ENCODE measurements at regions of chr17 and their contacts with region 1.

Region 1: DNA sequence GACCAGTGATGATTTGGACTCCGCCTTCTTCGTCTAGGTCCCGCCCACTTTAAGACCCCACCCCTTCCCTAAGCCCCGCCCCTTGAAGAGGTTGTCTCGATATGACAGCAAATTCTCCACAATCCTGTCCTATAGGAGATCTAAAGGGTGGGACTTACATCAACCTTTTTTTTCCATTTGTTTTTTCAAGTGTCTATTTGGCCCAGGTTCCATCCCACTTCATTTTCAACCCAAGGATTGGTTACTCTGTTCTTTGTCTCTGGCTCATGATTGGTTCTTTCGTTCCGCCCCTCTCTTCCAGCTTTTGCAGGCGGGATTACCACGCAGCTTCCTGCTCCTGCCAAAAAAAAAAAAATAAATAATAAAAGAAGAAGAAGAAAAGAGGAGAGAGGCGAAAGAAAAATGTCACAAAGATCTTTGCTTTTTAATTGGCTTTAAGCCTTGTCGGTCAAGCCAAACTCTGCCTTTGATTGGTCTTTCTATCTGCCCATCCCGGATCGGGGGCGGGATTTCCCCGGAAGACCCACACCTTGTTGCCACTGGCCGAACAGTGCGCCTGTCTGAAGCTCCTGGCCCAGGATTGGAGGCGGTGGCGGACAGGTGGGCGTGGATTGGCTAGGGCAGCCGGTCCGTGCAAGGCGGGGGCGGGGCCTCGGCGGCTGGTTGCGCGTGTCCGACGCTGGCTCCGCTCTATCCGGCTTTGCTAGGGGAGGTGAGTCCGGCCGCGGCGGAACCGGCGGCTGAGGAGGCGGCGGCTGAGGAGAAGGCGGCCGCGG is 1.2 kb upstream of the NLK start:
- DNase-seq: peak; percentile 100
- H3K4me3 ChIP-seq: peak overlapping the region; percentile 87
- H3K4me3 Mint-ChIP-seq: peak overlapping the region; percentile 99
- H3K27ac Mint-ChIP-seq: peak overlapping the region; percentile 93
- H3K4me1 ChIP-seq: peaks cover 40% of the 10 kb centered on the region
- H3K4me1 Mint-ChIP-seq: peaks cover 24% of the 10 kb centered on the region
- H3K27me3 ChIP-seq: no peaks in the 10 kb centered on the region
- H3K27me3 Mint-ChIP-seq: no peaks in the 10 kb centered on the region
- CTCF ChIP-seq: no peak

Region 2: GRCh38 chr17:27805520-27806146 is 235.6 kb before region 1 on chr17:
- CTCF ChIA-PET with region 1: interaction called, 7 read pairs
- POLR2A ChIA-PET with region 1: no interaction called
- intact Hi-C with region 1: loop called (anchors 5 kb)
- DNase-seq: peak; percentile 97
- H3K4me3 ChIP-seq: peak overlapping the region; percentile 19
- H3K4me3 Mint-ChIP-seq: peak overlapping the region; percentile 65
- H3K27ac Mint-ChIP-seq: peak overlapping the region; percentile 95
- H3K4me1 ChIP-seq: peaks cover 52% of the 10 kb centered on the region
- H3K4me1 Mint-ChIP-seq: peaks cover 41% of the 10 kb centered on the region
- H3K27me3 ChIP-seq: no peaks in the 10 kb centered on the region
- H3K27me3 Mint-ChIP-seq: no peaks in the 10 kb centered on the region
- CTCF ChIP-seq: peak; percentile 99

Region 3: DNA sequence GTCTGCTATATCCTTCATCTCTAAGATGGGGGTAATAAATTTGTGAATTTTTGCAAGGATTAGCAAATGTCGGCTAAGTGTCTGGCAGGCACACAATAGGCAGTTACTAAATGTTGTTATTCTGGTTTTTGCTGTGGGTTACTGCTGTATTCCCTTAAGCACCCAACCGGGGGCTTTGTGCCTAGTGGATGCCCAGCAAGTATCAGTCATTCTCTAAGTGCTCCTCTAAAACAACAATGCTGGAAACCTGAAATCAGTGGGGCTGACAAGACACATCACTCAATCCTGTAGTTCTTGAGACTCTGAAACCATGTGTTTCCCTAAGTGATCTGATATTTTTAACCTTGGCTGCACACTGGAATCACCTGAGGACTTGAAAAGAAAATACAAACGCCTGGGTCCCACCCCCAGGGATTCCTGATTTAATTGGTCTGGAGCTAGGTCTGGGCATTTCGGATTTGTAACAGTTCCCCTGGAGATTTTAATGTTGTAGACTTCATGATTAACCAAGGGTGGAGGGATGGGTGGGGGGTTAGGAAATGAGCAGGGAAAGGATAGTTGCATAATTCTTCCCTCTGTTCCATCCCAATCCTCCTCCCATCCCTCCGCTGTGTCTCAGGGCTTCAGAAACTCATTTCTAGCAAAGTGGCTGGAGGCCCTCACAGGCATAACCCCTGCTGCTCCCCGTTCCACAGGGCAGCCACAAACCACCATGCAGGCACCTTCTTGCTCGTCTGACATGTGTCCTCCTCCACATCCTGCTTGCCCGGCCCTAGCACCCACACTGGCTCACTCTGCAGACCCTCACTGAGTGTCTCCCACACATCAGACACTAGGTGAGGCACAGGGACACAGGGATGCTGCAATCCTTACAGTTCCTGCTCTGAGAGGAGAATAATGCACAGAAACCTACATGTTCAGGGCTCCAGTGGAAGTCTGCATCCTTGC is 86.4 kb before region 1 on chr17:
- CTCF ChIA-PET with region 1: no interaction called
- POLR2A ChIA-PET with region 1: interaction called, 6 read pairs
- intact Hi-C with region 1: loop called (anchors 5 kb)
- DNase-seq: peak in 1 of 2 experiments; percentile 46
- H3K4me3 ChIP-seq: no peak overlapping the region
- H3K4me3 Mint-ChIP-seq: no peak overlapping the region
- H3K27ac Mint-ChIP-seq: no peak overlapping the region
- H3K4me1 ChIP-seq: peaks cover 56% of the 10 kb centered on the region
- H3K4me1 Mint-ChIP-seq: peaks cover 43% of the 10 kb centered on the region
- H3K27me3 ChIP-seq: no peaks in the 10 kb centered on the region
- H3K27me3 Mint-ChIP-seq: no peaks in the 10 kb centered on the region
- CTCF ChIP-seq: peak in 1 of 2 experiments; percentile 3

Region 4: DNA sequence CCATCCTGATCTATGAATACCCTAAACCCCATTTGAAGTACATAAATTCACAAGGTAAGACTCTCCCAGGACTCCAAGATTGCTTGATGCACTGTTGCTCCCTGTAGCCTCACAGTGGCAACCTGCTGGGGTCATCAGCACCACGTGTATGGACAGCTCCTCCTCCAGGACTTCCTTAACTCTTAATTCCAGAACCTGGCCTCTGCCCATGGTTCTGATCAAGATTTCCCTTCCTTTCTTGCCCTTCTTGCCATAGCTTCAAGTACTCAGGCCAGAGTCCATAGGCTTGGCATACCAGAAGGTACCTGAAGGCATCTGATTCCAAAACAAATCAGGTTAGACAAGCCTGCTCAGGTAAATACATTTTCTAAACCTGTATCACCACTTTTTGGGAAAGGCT is 32.7 kb before region 1 on chr17:
- CTCF ChIA-PET with region 1: interaction called, 7 read pairs
- POLR2A ChIA-PET with region 1: interaction called, 5 read pairs
- intact Hi-C with region 1: loop called (anchors 1 kb)
- DNase-seq: peak; percentile 91 to 94
- H3K4me3 ChIP-seq: no peak overlapping the region
- H3K4me3 Mint-ChIP-seq: no peak overlapping the region
- H3K27ac Mint-ChIP-seq: no peak overlapping the region
- H3K4me1 ChIP-seq: peaks cover 5% of the 10 kb centered on the region; the same call in 1 of the 2 replicates
- H3K4me1 Mint-ChIP-seq: no peaks in the 10 kb centered on the region
- H3K27me3 ChIP-seq: no peaks in the 10 kb centered on the region
- H3K27me3 Mint-ChIP-seq: peaks cover 5% of the 10 kb centered on the region
- CTCF ChIP-seq: peak in 1 of 2 experiments; percentile 0

Region 5: DNA sequence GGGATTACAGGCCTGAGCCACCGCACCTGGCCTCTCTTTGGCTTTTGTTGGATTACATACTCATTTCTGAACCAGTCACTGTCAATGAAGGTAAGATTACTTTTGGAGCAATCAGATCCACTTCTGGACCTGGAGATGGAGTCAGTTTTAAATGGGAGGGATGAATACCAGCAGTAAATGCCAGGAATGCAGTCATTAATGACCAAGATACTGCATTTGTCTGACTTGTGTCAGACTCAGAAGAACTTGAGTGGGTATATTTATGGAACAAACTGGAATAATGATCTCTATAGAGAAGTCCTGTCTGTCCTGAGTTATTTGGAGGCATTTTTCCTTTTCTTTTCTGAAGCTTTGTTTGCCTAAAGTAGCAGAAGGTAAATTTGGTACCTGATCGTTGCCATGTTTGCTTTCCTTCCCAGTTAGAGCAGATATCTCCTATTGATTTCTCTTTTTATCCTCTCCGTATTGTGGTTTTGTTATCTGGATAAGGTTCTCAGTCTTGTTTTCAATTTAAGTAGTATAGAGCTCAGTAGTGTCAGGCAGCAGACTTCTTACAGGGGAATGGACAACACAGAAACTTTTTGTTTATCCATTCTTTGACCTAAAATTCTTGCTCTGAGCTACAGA is 11.9 kb after region 1 on chr17:
- CTCF ChIA-PET with region 1: interaction called, 5 read pairs
- POLR2A ChIA-PET with region 1: interaction called, 20 read pairs
- intact Hi-C with region 1: no loop called
- DNase-seq: no peak
- H3K4me3 ChIP-seq: no peak overlapping the region
- H3K4me3 Mint-ChIP-seq: peak overlapping the region; percentile 5
- H3K27ac Mint-ChIP-seq: peak overlapping the region; percentile 17
- H3K4me1 ChIP-seq: peaks cover 31% of the 10 kb centered on the region
- H3K4me1 Mint-ChIP-seq: peaks cover 58% of the 10 kb centered on the region
- H3K27me3 ChIP-seq: no peaks in the 10 kb centered on the region
- H3K27me3 Mint-ChIP-seq: no peaks in the 10 kb centered on the region
- CTCF ChIP-seq: no peak

Region 6: DNA sequence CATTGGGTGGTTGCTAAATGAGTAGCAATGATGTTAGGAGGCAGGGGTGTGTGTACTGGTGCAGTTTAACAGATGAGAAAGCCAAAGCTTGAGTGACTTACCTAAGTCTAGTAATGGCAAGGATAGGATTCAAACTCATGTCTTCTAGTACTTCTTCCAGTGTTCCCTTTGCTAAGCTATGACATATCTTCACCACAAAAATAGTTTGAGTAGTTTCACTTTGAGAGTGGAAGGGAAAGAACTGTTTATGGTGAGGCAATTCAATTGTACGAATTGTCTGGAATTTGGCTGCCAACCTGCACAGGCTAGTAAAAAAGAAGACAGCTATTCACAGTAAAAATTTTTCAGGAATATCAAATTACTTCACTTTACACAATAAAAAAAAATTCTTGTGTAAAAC is 139.2 kb after region 1 on chr17:
- CTCF ChIA-PET with region 1: no interaction called
- POLR2A ChIA-PET with region 1: interaction called, 4 read pairs
- intact Hi-C with region 1: loop called (anchors 10 kb)
- DNase-seq: no peak
- H3K4me3 ChIP-seq: no peak overlapping the region
- H3K4me3 Mint-ChIP-seq: no peak overlapping the region
- H3K27ac Mint-ChIP-seq: no peak overlapping the region
- H3K4me1 ChIP-seq: no peaks in the 10 kb centered on the region
- H3K4me1 Mint-ChIP-seq: no peaks in the 10 kb centered on the region
- H3K27me3 ChIP-seq: no peaks in the 10 kb centered on the region
- H3K27me3 Mint-ChIP-seq: no peaks in the 10 kb centered on the region
- CTCF ChIP-seq: no peak

Region 7: DNA sequence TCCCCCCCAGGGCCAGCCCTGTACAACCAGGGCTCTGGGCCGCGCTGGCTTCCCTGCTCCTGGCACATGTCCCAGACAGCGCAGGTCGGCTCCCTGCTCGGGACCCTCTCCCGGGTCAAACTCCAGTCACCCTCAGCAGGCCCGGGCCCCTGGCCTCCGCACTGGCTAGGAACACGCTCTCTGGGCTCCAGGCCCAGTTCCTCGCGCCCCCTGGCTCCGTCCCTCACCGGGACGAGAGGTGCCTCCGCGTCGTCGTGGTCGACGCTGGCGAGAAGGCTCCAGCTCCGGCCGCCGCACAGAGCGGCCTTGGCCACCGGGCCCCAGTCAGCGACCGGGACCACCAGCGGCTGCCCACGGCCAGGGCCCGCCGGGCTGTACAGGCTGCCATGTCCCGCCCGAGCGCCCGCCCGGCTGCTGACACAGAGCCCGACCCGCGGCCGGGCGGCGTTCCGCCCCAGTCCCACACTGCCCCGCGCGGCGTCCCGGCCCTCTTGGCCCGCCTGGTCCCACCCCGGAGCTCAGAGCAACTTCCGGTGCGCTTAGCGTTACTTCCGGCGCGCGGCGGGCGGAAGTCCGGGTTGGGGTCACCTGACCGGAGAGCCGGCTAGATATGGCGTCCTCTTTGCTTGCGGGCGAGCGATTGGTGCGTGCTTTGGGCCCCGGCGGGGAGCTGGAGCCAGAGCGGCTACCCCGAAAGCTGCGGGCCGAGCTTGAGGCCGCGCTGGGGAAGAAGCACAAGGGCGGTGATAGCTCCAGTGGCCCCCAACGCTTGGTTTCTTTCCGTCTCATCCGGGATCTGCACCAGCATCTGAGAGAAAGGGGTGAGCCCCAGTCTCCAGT is 316.0 kb after region 1 on chr17 and contains the start of gene POLDIP2:
- CTCF ChIA-PET with region 1: no interaction called
- POLR2A ChIA-PET with region 1: interaction called, 12 read pairs
- intact Hi-C with region 1: no loop called
- DNase-seq: peak; percentile 99 to 100
- H3K4me3 ChIP-seq: peak within 1 kb of the TSS; percentile 78
- H3K4me3 Mint-ChIP-seq: peak within 1 kb of the TSS; percentile 90
- H3K27ac Mint-ChIP-seq: peak within 1 kb of the TSS; percentile 96
- H3K4me1 ChIP-seq: peaks cover 15% of the 10 kb centered on the region
- H3K4me1 Mint-ChIP-seq: peaks cover 22% of the 10 kb centered on the region
- H3K27me3 ChIP-seq: no peaks in the 10 kb centered on the region
- H3K27me3 Mint-ChIP-seq: no peaks in the 10 kb centered on the region
- CTCF ChIP-seq: peak in 1 of 2 experiments; percentile 15
- total RNA-seq, gene POLDIP2: 257 and 265 TPM in 2 replicates